ENCODE measurements at regions of chr13 and their contacts with region 1.

Region 1: DNA sequence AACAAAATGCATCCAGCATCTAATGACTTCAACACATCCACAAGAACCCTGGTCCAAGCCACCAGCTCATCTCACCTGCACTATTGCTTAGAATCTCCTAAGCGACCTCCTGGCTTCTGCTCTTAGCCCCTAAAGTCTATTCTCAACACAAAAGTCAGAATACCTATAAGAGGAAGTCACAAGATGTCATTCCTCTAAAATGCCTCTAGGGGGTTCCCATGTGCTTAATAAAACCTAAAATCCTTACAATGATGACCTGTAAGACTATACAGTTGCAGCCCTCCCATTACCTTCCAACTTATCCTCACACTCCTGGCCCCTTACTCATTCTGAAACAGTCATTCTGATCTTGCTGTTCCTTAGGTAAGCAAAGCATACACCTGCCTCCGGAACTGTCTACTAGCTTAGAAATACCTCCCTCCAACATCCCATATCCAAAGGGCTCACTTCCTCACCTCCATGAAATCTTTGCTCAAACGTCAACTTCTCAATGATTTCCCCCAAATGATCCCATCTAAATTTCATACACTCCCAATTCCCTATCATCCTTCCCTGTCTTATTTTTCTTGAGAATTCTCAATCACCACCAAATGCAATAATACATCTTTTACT is 10.0 kb downstream of the ATP7B start:
- DNase-seq: no peak
- H3K4me3 ChIP-seq: no peak overlapping the region
- H3K27me3 ChIP-seq: peaks cover 12% of the 10 kb centered on the region
- CTCF ChIP-seq: peak; percentile 68

Region 2: DNA sequence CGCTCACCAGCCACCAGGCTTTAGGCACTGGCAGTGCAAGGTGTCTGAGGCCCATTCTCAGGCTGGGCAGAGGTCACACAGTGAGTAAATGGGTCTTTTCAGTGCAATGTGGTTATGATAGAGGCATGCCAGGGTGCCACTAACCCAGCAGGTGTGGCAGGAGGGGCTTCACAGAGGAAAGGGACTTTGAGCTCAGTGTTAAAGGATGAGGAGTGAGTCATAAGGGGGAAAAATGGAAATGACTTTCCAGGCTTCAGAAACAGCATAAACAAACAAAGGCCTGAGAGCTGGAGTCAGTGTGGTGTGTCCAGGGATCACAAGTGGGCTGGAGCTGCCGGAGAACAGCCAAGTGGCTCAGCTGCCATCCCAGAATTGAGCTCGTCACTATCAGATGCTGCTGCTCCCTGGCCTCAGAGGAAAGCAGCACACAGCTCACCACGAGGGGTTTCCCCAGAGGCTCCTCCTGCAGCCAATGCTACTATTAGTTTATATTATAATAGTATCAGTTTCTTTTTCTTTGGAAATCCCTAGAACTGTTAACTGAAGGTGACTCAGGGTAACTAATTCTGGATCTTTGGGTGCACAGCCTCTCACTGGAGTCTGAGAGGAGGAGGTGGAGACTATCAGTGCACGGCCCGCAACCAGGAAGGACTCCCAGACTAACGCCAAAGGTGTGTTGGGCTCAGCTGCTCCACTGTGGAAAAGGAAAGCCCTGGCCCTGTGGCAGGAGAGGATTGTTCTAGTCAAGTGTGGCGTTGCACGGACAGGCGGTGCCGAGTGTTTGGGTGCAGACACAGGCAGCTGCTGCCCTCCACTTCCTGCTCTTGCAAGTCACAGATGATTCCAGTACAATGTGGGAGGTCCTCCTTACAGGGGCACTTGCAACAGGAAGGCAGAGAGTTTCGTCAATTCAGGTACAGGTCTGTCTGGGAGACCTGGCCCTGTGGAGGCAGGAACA is 236.8 kb before region 1 on chr13:
- CTCF ChIA-PET with region 1: no interaction called
- POLR2A ChIA-PET with region 1: no interaction called
- DNase-seq: no peak
- H3K4me3 ChIP-seq: no peak overlapping the region
- H3K27me3 ChIP-seq: no peaks in the 10 kb centered on the region
- CTCF ChIP-seq: no peak

Region 3: DNA sequence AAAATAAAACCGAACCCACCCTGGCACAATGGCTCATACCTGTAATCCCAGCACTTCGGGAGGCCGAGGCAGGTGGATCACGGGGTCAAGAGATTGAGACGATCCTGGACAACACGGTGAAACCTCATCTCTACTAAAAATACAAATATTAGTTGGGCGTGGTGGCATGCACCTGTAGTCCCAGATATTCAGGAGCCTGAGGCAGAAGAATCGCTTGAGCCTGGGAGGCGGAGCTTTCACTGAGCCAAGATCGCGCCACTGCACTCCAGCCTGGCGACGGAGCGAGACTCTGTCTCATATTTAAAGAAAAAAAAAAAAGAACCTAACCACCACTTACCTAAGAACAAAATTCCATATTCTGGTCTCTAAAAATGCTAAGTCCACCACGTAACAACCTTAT is 10.4 kb before region 1 on chr13:
- CTCF ChIA-PET with region 1: interaction called, 11 read pairs
- POLR2A ChIA-PET with region 1: no interaction called
- DNase-seq: no peak
- H3K4me3 ChIP-seq: no peak overlapping the region
- H3K27me3 ChIP-seq: peaks cover 2% of the 10 kb centered on the region
- CTCF ChIP-seq: no peak